Left colon (tissue), 2 donors: ENCODE measurements at regions of chr12 and their contacts with region 1.

Region 1: GRCh38 chr12:94285943-94286582 is 137.7 kb downstream of the PLXNC1 start:
- DNase-seq: no peak
- ATAC-seq: no peak

Region 2: GRCh38 chr12:94133964-94134795 is 151.9 kb before region 1 on chr12:
- intact Hi-C with region 1: no loop called
- DNase-seq: no peak
- ATAC-seq: peak; percentile 96

Region 3: GRCh38 chr12:94230357-94230905 is 55.6 kb before region 1 on chr12:
- intact Hi-C with region 1: no loop called
- DNase-seq: no peak
- ATAC-seq: no peak

Region 4: GRCh38 chr12:94244165-94245133 is 41.6 kb before region 1 on chr12:
- intact Hi-C with region 1: no loop called
- DNase-seq: peak; percentile 34 to 41
- ATAC-seq: no peak

Region 5: DNA sequence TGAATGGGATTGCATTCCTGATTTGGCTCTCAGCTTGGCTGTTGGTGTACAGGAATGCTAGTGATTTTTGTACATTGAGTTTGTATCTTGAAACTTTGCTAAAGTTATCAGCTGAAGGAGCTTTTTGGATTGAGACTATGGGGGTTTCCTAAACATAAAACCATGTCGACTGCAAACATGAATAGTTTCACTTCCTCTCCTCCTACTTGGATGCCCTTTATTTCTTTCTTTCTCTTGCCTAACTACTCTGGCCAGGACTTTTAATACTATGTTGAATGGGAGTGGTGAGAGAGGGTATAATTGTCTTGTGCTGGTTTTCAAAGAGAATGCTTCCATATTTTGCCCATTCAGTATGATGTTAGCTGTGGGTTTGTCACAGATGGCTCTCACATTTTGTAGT is 32.1 kb after region 1 on chr12:
- intact Hi-C with region 1: loop called in 1 of 2 experiments (anchors 2 kb)
- DNase-seq: no peak
- ATAC-seq: no peak